CD8-positive, alpha-beta T cell (primary cell): ENCODE measurements at regions of chr16 and their contacts with region 1.

Region 1: GRCh38 chr16:69565671-69566239 is at the start of gene NFAT5:
- DNase-seq: peak; percentile 83 to 97 (median 90)
- ATAC-seq: peak; percentile 82
- H3K4me3 ChIP-seq: peak within 1 kb of the TSS; percentile 78 to 91
- H3K4me3 Mint-ChIP-seq: peak within 1 kb of the TSS; percentile 96
- H3K27ac ChIP-seq: peak within 1 kb of the TSS; percentile 87 to 89
- H3K27ac Mint-ChIP-seq: peak within 1 kb of the TSS; percentile 98
- H3K4me1 ChIP-seq: peaks cover 36% of the 10 kb centered on the region
- H3K4me1 Mint-ChIP-seq: peaks cover 46% of the 10 kb centered on the region
- H3K27me3 ChIP-seq: no peaks in the 10 kb centered on the region
- H3K27me3 Mint-ChIP-seq: no peaks in the 10 kb centered on the region
- CTCF ChIP-seq: no peak
- total RNA-seq, gene NFAT5: 22.0 to 27.6 TPM

Region 2: GRCh38 chr16:69116906-69117305 is 448.8 kb before region 1 on chr16:
- CTCF ChIA-PET with region 1: no interaction called
- POLR2A ChIA-PET with region 1: no interaction called
- intact Hi-C with region 1: no loop called
- DNase-seq: no peak
- ATAC-seq: no peak
- H3K4me3 ChIP-seq: no peak overlapping the region
- H3K4me3 Mint-ChIP-seq: no peak overlapping the region
- H3K27ac ChIP-seq: no peak overlapping the region
- H3K27ac Mint-ChIP-seq: no peak overlapping the region
- H3K4me1 ChIP-seq: no peaks in the 10 kb centered on the region
- H3K4me1 Mint-ChIP-seq: peaks cover 9% of the 10 kb centered on the region
- H3K27me3 ChIP-seq: no peaks in the 10 kb centered on the region
- H3K27me3 Mint-ChIP-seq: no peaks in the 10 kb centered on the region
- CTCF ChIP-seq: no peak

Region 3: GRCh38 chr16:69132424-69133252 is 433.1 kb before region 1 on chr16 and contains the starts of genes CHTF8 and UTP4:
- CTCF ChIA-PET with region 1: no interaction called
- POLR2A ChIA-PET with region 1: no interaction called
- intact Hi-C with region 1: loop called in 1 of 2 experiments (anchors 10 kb)
- DNase-seq: peak; percentile 69 to 91 (median 87)
- ATAC-seq: peak; percentile 85
- H3K4me3 ChIP-seq: peak within 1 kb of the TSS; percentile 92 to 98
- H3K4me3 Mint-ChIP-seq: peak within 1 kb of the TSS; percentile 94
- H3K27ac ChIP-seq: peak within 1 kb of the TSS; percentile 77 to 90
- H3K27ac Mint-ChIP-seq: peak within 1 kb of the TSS; percentile 95
- H3K4me1 ChIP-seq: peaks cover 26% of the 10 kb centered on the region
- H3K4me1 Mint-ChIP-seq: peaks cover 65% of the 10 kb centered on the region
- H3K27me3 ChIP-seq: no peaks in the 10 kb centered on the region
- H3K27me3 Mint-ChIP-seq: no peaks in the 10 kb centered on the region
- CTCF ChIP-seq: no peak
- total RNA-seq, gene CHTF8: 26.2 to 28.8 TPM
- total RNA-seq, gene UTP4: 45.8 to 48.7 TPM

Region 4: GRCh38 chr16:69330286-69331109 is 235.3 kb before region 1 on chr16 and contains the start of gene PDF:
- CTCF ChIA-PET with region 1: no interaction called
- POLR2A ChIA-PET with region 1: no interaction called
- intact Hi-C with region 1: loop called (anchors 5 kb)
- DNase-seq: peak in 8 of 9 experiments; percentile 79 to 91 (median 82)
- ATAC-seq: peak; percentile 91
- H3K4me3 ChIP-seq: peak within 1 kb of the TSS; percentile 53 to 83
- H3K4me3 Mint-ChIP-seq: peak within 1 kb of the TSS; percentile 79
- H3K27ac ChIP-seq: peak within 1 kb of the TSS; percentile 60 to 75
- H3K27ac Mint-ChIP-seq: peak within 1 kb of the TSS; percentile 74
- H3K4me1 ChIP-seq: peaks cover 43% of the 10 kb centered on the region
- H3K4me1 Mint-ChIP-seq: peaks cover 52% of the 10 kb centered on the region
- H3K27me3 ChIP-seq: no peaks in the 10 kb centered on the region
- H3K27me3 Mint-ChIP-seq: no peaks in the 10 kb centered on the region
- CTCF ChIP-seq: no peak
- total RNA-seq, gene PDF: 3.3 to 3.6 TPM

Region 5: GRCh38 chr16:69396187-69397061 is 169.3 kb before region 1 on chr16:
- CTCF ChIA-PET with region 1: interaction called, 15 read pairs
- POLR2A ChIA-PET with region 1: no interaction called
- intact Hi-C with region 1: loop called (anchors 1 to 2 kb)
- DNase-seq: peak; percentile 27 to 87 (median 74)
- ATAC-seq: peak; percentile 85
- H3K4me3 ChIP-seq: no peak overlapping the region
- H3K4me3 Mint-ChIP-seq: no peak overlapping the region
- H3K27ac ChIP-seq: peak overlapping the region in 1 of 2 experiments; percentile 58
- H3K27ac Mint-ChIP-seq: peak overlapping the region; percentile 0
- H3K4me1 ChIP-seq: peaks cover 4% of the 10 kb centered on the region
- H3K4me1 Mint-ChIP-seq: peaks cover 6% of the 10 kb centered on the region
- H3K27me3 ChIP-seq: no peaks in the 10 kb centered on the region
- H3K27me3 Mint-ChIP-seq: no peaks in the 10 kb centered on the region
- CTCF ChIP-seq: peak; percentile 80

Region 6: GRCh38 chr16:69531988-69532387 is 33.8 kb before region 1 on chr16:
- CTCF ChIA-PET with region 1: no interaction called
- POLR2A ChIA-PET with region 1: no interaction called
- intact Hi-C with region 1: loop called (anchors 2 kb)
- DNase-seq: no peak
- ATAC-seq: no peak
- H3K4me3 ChIP-seq: no peak overlapping the region
- H3K4me3 Mint-ChIP-seq: no peak overlapping the region
- H3K27ac ChIP-seq: no peak overlapping the region
- H3K27ac Mint-ChIP-seq: no peak overlapping the region
- H3K4me1 ChIP-seq: no peaks in the 10 kb centered on the region
- H3K4me1 Mint-ChIP-seq: peaks cover 10% of the 10 kb centered on the region
- H3K27me3 ChIP-seq: no peaks in the 10 kb centered on the region
- H3K27me3 Mint-ChIP-seq: no peaks in the 10 kb centered on the region
- CTCF ChIP-seq: no peak

Region 7: GRCh38 chr16:69632836-69633235 is 67.1 kb after region 1 on chr16:
- CTCF ChIA-PET with region 1: no interaction called
- POLR2A ChIA-PET with region 1: no interaction called
- intact Hi-C with region 1: no loop called
- DNase-seq: no peak
- ATAC-seq: no peak
- H3K4me3 ChIP-seq: no peak overlapping the region
- H3K4me3 Mint-ChIP-seq: no peak overlapping the region
- H3K27ac ChIP-seq: no peak overlapping the region
- H3K27ac Mint-ChIP-seq: no peak overlapping the region
- H3K4me1 ChIP-seq: no peaks in the 10 kb centered on the region
- H3K4me1 Mint-ChIP-seq: no peaks in the 10 kb centered on the region
- H3K27me3 ChIP-seq: no peaks in the 10 kb centered on the region
- H3K27me3 Mint-ChIP-seq: no peaks in the 10 kb centered on the region
- CTCF ChIP-seq: no peak

Region 8: GRCh38 chr16:69761983-69762813 is 196.4 kb after region 1 on chr16 and contains the start of gene WWP2:
- CTCF ChIA-PET with region 1: no interaction called
- POLR2A ChIA-PET with region 1: no interaction called
- intact Hi-C with region 1: loop called in 1 of 2 experiments (anchors 5 kb)
- DNase-seq: peak; percentile 54 to 92 (median 77)
- ATAC-seq: peak; percentile 81
- H3K4me3 ChIP-seq: peak within 1 kb of the TSS; percentile 91 to 100
- H3K4me3 Mint-ChIP-seq: peak within 1 kb of the TSS; percentile 94
- H3K27ac ChIP-seq: peak within 1 kb of the TSS; percentile 97 to 99
- H3K27ac Mint-ChIP-seq: peak within 1 kb of the TSS; percentile 98
- H3K4me1 ChIP-seq: peaks cover 17% of the 10 kb centered on the region
- H3K4me1 Mint-ChIP-seq: peaks cover 31% of the 10 kb centered on the region
- H3K27me3 ChIP-seq: no peaks in the 10 kb centered on the region
- H3K27me3 Mint-ChIP-seq: no peaks in the 10 kb centered on the region
- CTCF ChIP-seq: no peak
- total RNA-seq, gene WWP2: 36.7 to 36.9 TPM